Caco-2 (cell line): ENCODE measurements at regions of chr3 and their contacts with region 1.

Region 1: DNA sequence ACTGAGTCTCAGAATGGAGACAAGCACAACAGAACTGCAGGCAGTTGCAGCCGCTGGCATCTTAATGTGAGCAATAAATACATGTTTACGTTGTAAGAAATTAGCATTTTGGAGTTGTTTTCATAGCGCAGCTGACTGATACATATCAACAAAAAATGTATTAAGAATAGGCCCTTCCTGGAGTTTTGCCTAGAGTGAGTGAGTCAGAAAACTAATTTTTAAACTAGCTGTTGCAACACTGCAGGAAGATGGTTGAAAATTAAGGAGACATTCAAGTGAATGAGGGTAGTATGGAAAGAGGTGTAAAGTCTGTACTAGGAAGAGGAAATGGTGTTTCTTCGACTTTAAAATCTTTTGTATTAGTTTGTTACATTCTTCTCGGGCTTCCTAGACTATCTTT is 39.6 kb upstream of the TIMP4 start:
- DNase-seq: no peak
- H3K4me3 ChIP-seq: no peak overlapping the region
- H3K4me3 Mint-ChIP-seq: no peak overlapping the region
- H3K27ac Mint-ChIP-seq: no peak overlapping the region
- H3K4me1 ChIP-seq: peaks cover 18% of the 10 kb centered on the region; the same call in 1 of the 2 replicates
- H3K4me1 Mint-ChIP-seq: peaks cover 20% of the 10 kb centered on the region
- H3K27me3 ChIP-seq: no peaks in the 10 kb centered on the region
- H3K27me3 Mint-ChIP-seq: no peaks in the 10 kb centered on the region
- CTCF ChIP-seq: no peak

Region 2: DNA sequence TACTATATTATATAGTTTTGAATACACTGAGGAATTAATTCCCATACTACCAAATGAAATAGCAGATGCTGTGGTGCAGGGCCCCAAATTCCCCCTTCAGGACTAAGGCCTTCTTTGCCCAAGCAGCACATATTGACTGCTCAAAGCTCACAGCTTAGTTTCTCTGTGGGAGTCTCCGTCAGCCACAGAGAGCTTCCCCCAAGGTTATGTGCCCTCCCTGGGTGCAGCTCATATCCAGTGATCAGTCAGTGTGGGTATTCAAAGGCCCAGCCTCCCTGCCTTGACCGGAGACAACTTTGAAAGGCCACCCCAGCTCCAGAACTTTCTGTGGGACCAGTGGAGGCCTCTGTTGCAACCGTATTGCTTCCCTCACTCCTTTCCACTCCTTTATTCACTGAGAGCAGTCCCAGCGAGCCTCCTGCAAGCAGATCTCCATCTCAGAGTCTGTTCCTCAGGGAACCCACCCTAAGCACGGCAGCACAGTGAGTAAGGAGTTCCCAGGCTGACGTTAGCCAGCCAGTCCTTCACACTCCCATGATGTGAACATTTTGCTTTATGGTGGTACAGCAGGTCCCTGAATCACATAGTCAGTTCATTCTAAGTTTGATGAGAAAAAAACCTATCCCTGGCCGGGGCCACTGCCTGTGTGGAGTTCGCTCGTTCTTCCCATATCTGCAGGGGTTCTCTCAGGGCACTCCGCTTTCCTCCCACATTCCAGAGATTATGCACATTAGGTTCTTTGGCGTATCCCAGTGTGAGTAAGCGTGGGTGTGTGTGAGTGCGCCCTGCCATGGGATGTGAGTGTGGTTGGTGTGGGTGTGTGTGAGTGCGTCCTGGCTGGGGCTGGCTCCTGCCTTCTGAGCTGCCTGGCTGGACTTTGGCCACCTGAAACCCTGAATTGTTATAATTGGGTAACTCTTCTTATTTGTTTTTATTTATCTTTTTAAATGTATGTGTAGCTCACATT is 26.2 kb after region 1 on chr3:
- CTCF ChIA-PET with region 1: no interaction called
- POLR2A ChIA-PET with region 1: no interaction called
- intact Hi-C with region 1: loop called (anchors 2 kb)
- DNase-seq: peak; percentile 17 to 58
- H3K4me3 ChIP-seq: no peak overlapping the region
- H3K4me3 Mint-ChIP-seq: no peak overlapping the region
- H3K27ac Mint-ChIP-seq: no peak overlapping the region
- H3K4me1 ChIP-seq: peaks cover 58% of the 10 kb centered on the region
- H3K4me1 Mint-ChIP-seq: peaks cover 47% of the 10 kb centered on the region
- H3K27me3 ChIP-seq: no peaks in the 10 kb centered on the region
- H3K27me3 Mint-ChIP-seq: no peaks in the 10 kb centered on the region
- CTCF ChIP-seq: no peak